Ascending aorta (tissue), 2 donors: ENCODE measurements at regions of chr2 and their contacts with region 1.

Region 1: DNA sequence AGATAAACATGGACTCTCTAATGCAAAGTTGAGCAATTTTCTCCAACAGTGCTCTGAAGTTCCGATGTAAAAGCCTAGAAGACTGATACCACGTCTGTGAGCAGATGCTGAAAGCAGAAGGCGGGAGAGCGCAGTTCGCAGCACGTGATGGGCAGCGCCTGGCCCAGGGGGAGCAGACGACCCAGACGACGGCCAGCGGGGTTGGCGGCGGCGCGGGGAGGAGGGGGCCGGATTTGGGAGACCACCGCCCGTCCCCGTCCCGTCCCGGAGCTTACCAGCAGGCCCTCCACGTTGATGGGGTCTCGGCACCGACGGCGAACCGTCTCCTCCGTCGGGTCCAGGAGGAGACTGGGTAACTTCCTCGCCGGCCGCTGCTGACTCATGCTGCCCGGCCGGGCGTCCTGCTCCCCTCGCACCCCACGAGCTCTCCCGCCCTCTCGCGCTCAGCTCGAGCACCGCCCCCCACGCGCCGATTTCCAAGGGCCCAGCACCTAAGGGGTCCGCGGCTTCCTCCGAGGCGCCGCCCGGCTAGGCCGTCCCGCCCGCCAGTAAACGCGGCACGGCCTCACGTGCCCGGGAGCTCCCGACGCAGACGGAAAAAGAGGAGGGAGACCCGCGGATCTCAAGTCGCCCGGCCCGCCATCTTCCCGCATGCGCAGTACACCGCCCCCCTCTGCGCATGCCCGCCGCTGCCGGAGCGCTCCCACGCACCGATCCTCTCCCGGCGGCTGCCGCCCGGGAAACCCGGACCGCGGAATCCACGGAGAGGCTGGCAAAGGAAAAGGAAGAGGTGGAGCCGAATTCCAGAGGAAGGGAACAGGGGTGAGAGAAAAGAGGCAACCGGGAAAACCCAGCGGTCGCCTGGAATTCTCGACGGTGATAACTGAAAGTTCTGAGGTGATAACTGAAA is at the start of gene E2F6:
- DNase-seq: peak; percentile 78 to 95
- H3K4me3 ChIP-seq: peak within 1 kb of the TSS; percentile 72 to 86
- H3K27ac ChIP-seq: peak within 1 kb of the TSS; percentile 84 to 93
- H3K4me1 ChIP-seq: peaks cover 3 to 20% of the 10 kb centered on the region in 2 donors
- H3K27me3 ChIP-seq: no peaks in the 10 kb centered on the region
- CTCF ChIP-seq: peak in 2 of 3 experiments; percentile 6 to 9
- total RNA-seq, gene E2F6: 1.9 TPM

Region 2: GRCh38 chr2:10448208-10448645 is 1017.5 kb before region 1 on chr2 and contains the start of gene ODC1:
- intact Hi-C with region 1: no loop called
- DNase-seq: peak; percentile 88 to 98
- H3K4me3 ChIP-seq: peak within 1 kb of the TSS; percentile 70 to 83
- H3K27ac ChIP-seq: peak within 1 kb of the TSS; percentile 92 to 96
- H3K4me1 ChIP-seq: peaks cover 7 to 33% of the 10 kb centered on the region in 2 donors
- H3K27me3 ChIP-seq: no peaks in the 10 kb centered on the region
- CTCF ChIP-seq: no peak
- total RNA-seq, gene ODC1: 82.8 TPM

Region 3: GRCh38 chr2:11154923-11155380 is 310.8 kb before region 1 on chr2:
- intact Hi-C with region 1: loop called (anchors 2 kb)
- DNase-seq: peak; percentile 88 to 98
- H3K4me3 ChIP-seq: peak overlapping the region; percentile 71 to 85
- H3K27ac ChIP-seq: peak overlapping the region; percentile 96
- H3K4me1 ChIP-seq: peaks cover 4 to 18% of the 10 kb centered on the region in 2 donors
- H3K27me3 ChIP-seq: no peaks in the 10 kb centered on the region
- CTCF ChIP-seq: no peak

Region 4: DNA sequence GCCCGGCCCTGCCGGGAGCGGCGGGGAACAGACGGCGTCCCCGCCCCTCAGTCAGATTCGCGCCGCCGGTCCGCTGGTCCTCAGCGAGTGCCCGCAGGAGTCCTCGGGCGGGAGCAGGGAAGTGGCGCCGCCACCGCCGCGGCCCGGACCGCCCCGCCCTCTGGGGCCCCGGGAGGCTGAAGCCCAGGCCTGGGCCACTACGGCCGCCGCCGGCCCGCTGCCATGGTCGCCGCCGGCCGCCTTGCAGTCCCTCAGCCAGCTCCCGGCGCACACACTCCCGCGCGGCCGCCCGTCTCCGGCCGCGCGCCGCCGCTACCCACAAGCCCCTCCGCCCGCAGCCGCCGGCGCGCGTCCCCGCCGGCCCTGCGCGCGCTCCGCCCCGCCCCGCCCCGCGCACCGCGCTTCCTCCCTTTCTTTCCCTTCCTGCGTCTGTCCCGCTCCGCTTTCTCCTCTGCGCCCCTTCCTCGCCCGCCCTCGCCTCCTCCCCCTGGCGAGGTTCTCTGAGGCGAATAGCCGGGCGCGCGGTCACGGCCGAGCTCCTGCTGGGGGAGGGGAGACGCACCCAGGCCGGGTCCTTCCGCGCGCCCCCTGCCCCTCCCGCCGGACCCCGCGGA is 121.3 kb before region 1 on chr2 and contains the start of gene ROCK2:
- intact Hi-C with region 1: loop called (anchors 2 kb)
- DNase-seq: peak; percentile 28 to 92
- H3K4me3 ChIP-seq: peak within 1 kb of the TSS; percentile 100
- H3K27ac ChIP-seq: peak within 1 kb of the TSS; percentile 99 to 100
- H3K4me1 ChIP-seq: peaks cover 0 to 14% of the 10 kb centered on the region in 2 donors
- H3K27me3 ChIP-seq: no peaks in the 10 kb centered on the region
- CTCF ChIP-seq: no peak
- total RNA-seq, gene ROCK2: 33.0 TPM

Region 5: GRCh38 chr2:11411768-11412448 is 53.8 kb before region 1 on chr2:
- intact Hi-C with region 1: loop called (anchors 2 kb)
- DNase-seq: peak in 1 of 2 donors; percentile 79
- H3K4me3 ChIP-seq: peak overlapping the region; percentile 44 to 59
- H3K27ac ChIP-seq: no peak overlapping the region
- H3K4me1 ChIP-seq: peaks cover 4 to 16% of the 10 kb centered on the region in 2 donors
- H3K27me3 ChIP-seq: no peaks in the 10 kb centered on the region
- CTCF ChIP-seq: peak; percentile 62 to 96 (median 83)

Region 6: GRCh38 chr2:11688222-11689069 is 222.7 kb after region 1 on chr2:
- intact Hi-C with region 1: loop called (anchors 5 kb)
- DNase-seq: peak; percentile 46 to 91
- H3K4me3 ChIP-seq: peak overlapping the region; percentile 32 to 47
- H3K27ac ChIP-seq: peak overlapping the region; percentile 57 to 70
- H3K4me1 ChIP-seq: peaks cover 0 to 17% of the 10 kb centered on the region in 2 donors
- H3K27me3 ChIP-seq: no peaks in the 10 kb centered on the region
- CTCF ChIP-seq: peak; percentile 74 to 95 (median 76)

Region 7: DNA sequence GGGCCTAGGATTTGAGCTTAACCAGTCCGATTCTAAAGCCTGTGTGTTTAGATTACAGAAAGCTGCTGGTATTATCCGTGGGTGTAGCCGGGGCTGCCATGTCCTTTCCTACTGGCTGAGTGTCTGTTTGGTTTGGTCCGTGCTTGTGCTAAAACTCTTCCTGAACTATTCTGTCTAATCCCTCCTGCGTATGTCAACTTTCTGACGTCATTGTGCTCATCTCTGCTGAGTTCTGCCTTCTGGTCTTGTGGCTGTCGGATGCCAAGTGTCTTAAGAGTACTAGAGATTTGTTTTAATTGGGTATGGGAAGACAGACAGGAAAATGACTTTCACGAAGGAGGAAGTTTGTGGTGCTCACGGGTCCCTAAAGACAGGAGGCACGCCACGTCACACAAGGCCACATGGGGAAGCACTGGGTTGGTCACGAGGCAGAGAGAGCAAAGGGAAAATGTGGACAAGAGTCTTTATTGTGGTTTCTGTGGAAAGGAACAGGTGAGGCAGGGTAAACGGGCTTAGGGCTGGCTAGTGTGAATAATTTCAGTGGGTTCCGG is 236.1 kb after region 1 on chr2:
- intact Hi-C with region 1: no loop called
- DNase-seq: peak in 1 of 2 donors; percentile 38
- H3K4me3 ChIP-seq: no peak overlapping the region
- H3K27ac ChIP-seq: no peak overlapping the region
- H3K4me1 ChIP-seq: peaks cover 10 to 11% of the 10 kb centered on the region in 2 donors
- H3K27me3 ChIP-seq: no peaks in the 10 kb centered on the region
- CTCF ChIP-seq: no peak